ENCODE measurements at regions of chr20 and their contacts with region 1.

Region 1: GRCh38 chr20:48657475-48658470 is 170.0 kb downstream of the PREX1 start:
- DNase-seq: peak; percentile 50
- H3K4me3 Mint-ChIP-seq: no peak overlapping the region
- H3K27ac Mint-ChIP-seq: peak overlapping the region; percentile 24
- H3K4me1 Mint-ChIP-seq: peaks cover 10% of the 10 kb centered on the region
- H3K27me3 Mint-ChIP-seq: no peaks in the 10 kb centered on the region

Region 2: DNA sequence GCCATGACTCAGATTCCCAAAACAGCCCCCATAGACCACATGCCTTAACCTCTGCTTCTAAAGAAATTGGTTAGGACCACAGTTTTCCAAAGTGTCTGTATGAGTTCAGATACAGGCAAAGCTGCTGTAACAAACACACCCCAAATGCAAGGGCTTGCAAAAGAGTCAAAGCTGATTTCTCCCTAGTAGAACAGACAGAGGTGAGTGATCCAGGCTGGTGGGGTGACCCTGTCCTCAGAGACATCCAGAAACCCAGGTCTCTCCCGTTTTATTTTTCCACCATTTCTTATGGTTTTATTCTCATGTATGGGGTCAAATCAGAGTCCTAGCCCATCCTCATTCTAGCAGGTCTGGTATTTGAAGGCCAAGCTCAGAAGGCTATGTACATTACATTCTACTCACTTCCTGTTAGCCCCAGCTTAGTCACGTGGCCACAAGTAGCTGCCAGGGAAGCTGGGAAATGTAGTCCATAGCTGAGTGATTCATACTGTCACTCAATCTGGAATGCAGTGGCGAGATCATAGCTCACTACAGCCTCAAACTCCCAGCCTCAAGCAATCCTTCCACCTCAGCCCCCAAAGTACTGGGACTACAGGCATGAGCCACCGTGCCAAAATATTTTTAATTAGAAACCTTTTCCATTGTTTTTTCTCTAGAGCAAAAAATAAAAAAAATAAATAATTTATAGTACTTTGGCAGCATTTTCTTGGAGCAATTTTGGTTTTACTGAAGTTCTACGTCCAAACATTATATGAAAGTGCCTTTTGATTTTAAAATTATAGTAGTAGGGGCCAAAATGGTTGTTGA is 1476.5 kb before region 1 on chr20:
- intact Hi-C with region 1: no loop called
- DNase-seq: no peak
- H3K4me3 Mint-ChIP-seq: no peak overlapping the region
- H3K27ac Mint-ChIP-seq: no peak overlapping the region
- H3K4me1 Mint-ChIP-seq: peaks cover 4% of the 10 kb centered on the region
- H3K27me3 Mint-ChIP-seq: no peaks in the 10 kb centered on the region

Region 3: GRCh38 chr20:48846498-48847485 is 189.0 kb after region 1 on chr20:
- intact Hi-C with region 1: loop called (anchors 5 kb)
- DNase-seq: no peak
- H3K4me3 Mint-ChIP-seq: peak overlapping the region; percentile 32
- H3K27ac Mint-ChIP-seq: peak overlapping the region; percentile 98
- H3K4me1 Mint-ChIP-seq: peaks cover 23% of the 10 kb centered on the region
- H3K27me3 Mint-ChIP-seq: peaks cover 18% of the 10 kb centered on the region

Region 4: GRCh38 chr20:48904365-48905296 is 246.9 kb after region 1 on chr20:
- intact Hi-C with region 1: loop called (anchors 1 kb)
- DNase-seq: peak; percentile 50
- H3K4me3 Mint-ChIP-seq: no peak overlapping the region
- H3K27ac Mint-ChIP-seq: no peak overlapping the region
- H3K4me1 Mint-ChIP-seq: peaks cover 16% of the 10 kb centered on the region
- H3K27me3 Mint-ChIP-seq: peaks cover 7% of the 10 kb centered on the region